Dorsolateral prefrontal cortex (tissue), 120 donors: ENCODE measurements at regions of chr15 and their contacts with region 1.

Region 1: DNA sequence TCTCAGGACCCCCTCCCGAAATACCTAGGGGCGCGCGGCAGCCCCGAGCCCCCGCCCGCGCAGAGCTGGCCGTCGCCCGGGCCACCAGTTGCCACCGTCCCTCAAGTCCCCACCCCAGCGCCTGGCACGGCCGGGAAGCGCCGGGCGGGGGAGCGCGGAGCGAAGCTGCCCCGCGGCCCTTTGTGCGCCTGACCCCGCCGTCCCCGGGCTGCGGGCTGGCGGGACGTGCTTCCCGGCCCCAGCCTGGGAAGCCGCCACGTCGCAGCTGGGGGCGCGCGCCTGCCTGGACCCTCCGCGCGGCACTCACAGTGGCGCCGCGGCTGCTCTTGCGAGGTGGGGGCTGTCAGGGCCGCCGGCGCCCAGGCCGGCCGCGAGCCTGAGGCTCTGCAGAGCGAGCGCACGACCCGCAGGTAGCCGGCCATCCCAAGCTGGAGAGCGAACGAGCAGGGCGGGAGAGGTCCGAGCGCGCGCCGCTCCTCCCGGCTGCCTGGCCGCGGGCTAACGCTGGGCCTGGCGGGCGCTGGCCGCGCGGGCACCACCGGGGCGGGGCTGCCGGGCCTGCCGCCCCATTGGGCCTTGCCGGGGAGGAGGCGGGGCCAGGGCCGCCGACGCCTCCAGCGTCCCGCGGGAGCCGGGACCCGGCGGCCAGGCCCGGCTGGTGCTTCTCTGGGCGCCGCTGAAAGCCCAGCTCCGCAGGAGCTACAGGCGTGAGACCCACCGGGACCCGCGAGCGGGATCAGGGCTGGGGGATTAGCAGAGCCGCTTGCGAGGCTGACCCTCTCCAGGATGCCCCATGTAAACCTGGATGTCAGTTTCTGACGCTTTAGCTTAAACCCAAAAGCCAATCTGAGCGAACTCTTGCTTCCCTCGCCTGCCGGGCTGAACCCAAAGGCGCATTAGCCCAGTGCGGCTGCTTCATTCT is at the start of gene IDH2:
- DNase-seq: peak; percentile 47 to 92 (median 78)
- H3K4me3 ChIP-seq: peak within 1 kb of the TSS; percentile 60 to 97 (median 84)
- H3K27ac ChIP-seq: peak within 1 kb of the TSS; percentile 91 to 100 (median 98)
- H3K27me3 ChIP-seq: no peaks in the 10 kb centered on the region
- CTCF ChIP-seq: peak in 8 of 56 donors; percentile 3 to 35 (median 12)
- total RNA-seq, gene IDH2: 40.2 to 175 (median 102) TPM

Region 2: GRCh38 chr15:89714775-89715174 is 387.5 kb before region 1 on chr15:
- intact Hi-C with region 1: no loop called
- DNase-seq: no peak
- H3K4me3 ChIP-seq: no peak overlapping the region
- H3K27ac ChIP-seq: no peak overlapping the region
- H3K27me3 ChIP-seq: no peaks in the 10 kb centered on the region
- CTCF ChIP-seq: no peak

Region 3: GRCh38 chr15:90154861-90155626 is 52.8 kb after region 1 on chr15:
- intact Hi-C with region 1: loop called in 1 of 2 experiments (anchors 5 kb)
- DNase-seq: no peak
- H3K4me3 ChIP-seq: no peak overlapping the region
- H3K27ac ChIP-seq: no peak overlapping the region
- H3K27me3 ChIP-seq: no peaks in the 10 kb centered on the region
- CTCF ChIP-seq: no peak

Region 4: DNA sequence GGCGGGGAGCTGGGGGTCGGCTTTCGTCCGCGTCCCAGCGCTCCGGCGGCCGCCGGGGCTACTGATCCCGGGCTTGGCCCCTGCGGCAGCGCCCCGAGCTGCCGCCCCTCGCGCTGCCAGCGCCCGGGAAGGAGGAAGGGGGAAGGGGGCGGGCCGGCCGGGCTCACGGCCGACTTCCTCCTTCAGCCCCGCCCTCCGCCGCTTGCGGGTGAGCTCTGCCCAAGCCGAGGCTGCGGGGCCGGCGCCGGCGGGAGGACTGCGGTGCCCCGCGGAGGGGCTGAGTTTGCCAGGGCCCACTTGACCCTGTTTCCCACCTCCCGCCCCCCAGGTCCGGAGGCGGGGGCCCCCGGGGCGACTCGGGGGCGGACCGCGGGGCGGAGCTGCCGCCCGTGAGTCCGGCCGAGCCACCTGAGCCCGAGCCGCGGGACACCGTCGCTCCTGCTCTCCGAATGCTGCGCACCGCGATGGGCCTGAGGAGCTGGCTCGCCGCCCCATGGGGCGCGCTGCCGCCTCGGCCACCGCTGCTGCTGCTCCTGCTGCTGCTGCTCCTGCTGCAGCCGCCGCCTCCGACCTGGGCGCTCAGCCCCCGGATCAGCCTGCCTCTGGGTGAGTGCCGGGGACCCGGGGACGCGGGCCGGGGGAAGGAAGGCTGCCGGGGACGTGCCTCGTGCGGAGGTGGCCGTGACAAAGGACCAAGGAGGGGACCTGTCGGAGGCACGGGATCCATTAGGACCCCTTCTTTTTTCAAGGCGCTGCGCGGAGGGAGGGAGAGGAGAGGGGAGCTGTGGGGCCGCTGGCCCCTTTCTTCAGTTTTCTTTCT is 99.1 kb after region 1 on chr15 and contains the start of gene SEMA4B:
- intact Hi-C with region 1: loop called in 1 of 2 experiments (anchors 10 kb)
- DNase-seq: peak in 8 of 10 donors; percentile 41 to 80 (median 68)
- H3K4me3 ChIP-seq: peak within 1 kb of the TSS; percentile 53 to 97 (median 87)
- H3K27ac ChIP-seq: peak within 1 kb of the TSS in 57 of 59 donors; percentile 7 to 92 (median 80)
- H3K27me3 ChIP-seq: no peaks in the 10 kb centered on the region
- CTCF ChIP-seq: peak in 12 of 56 donors; percentile 6 to 29 (median 14)
- total RNA-seq, gene SEMA4B: 21.9 to 147 (median 66.9) TPM